AG04450 (cell line): ENCODE measurements at regions of chr2 and their contacts with region 1.

Region 1: GRCh38 chr2:128321784-128322714 is 3.4 kb upstream of the HS6ST1 start:
- DNase-seq: no peak
- H3K4me3 ChIP-seq: peak overlapping the region; percentile 61
- H3K27ac ChIP-seq: peak overlapping the region; percentile 21
- H3K27me3 ChIP-seq: no peaks in the 10 kb centered on the region
- CTCF ChIP-seq: peak; percentile 59

Region 2: GRCh38 chr2:128172191-128172590 is 149.9 kb before region 1 on chr2:
- CTCF ChIA-PET with region 1: interaction called, 10 read pairs
- POLR2A ChIA-PET with region 1: no interaction called
- DNase-seq: no peak
- H3K4me3 ChIP-seq: no peak overlapping the region
- H3K27ac ChIP-seq: no peak overlapping the region
- H3K27me3 ChIP-seq: no peaks in the 10 kb centered on the region
- CTCF ChIP-seq: peak; percentile 55

Region 3: GRCh38 chr2:128756365-128756717 is 434.3 kb after region 1 on chr2:
- CTCF ChIA-PET with region 1: interaction called, 11 read pairs
- POLR2A ChIA-PET with region 1: no interaction called
- DNase-seq: no peak
- H3K4me3 ChIP-seq: no peak overlapping the region
- H3K27ac ChIP-seq: no peak overlapping the region
- H3K27me3 ChIP-seq: peaks cover 25% of the 10 kb centered on the region
- CTCF ChIP-seq: no peak